ENCODE measurements at regions of chr2 and their contacts with region 1.

Region 1: DNA sequence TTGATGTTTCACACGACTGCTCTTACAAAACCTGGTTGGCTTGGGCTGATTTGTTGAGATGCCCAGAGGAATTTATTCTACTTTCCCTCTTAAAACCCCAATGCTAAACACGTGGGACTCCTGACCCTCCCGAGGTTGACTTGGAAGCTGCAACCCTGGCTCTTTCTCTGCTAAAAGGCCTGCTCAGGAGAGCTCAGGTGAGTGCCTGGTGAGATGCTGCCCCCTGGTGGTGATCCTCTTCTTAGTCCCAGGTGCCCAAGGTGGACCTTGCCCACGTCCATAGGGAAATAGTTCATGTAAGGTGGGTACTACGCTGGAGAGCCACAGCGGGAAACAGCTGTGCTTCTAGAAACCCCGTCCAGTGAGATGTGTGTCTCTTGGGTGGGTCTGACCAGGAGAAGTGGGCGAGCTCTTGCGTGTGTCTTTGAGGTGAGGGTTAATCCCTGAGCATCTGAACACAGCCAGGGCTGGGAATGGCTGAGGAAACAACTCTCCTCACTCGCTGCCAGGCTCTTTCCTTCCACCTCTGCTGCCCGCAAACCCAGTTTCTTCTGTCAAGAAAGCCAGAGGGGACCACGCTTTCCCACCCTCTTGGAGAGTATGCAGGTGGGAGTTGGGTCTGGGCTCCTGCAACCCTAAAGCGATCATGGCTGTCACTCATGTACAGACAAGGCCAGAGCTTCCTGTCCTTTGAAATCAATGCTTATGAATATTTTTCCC is 25.5 kb upstream of the PXDN start:
- DNase-seq: peak; percentile 73
- H3K4me3 Mint-ChIP-seq: no peak overlapping the region
- H3K27ac Mint-ChIP-seq: no peak overlapping the region
- H3K4me1 Mint-ChIP-seq: no peaks in the 10 kb centered on the region
- H3K27me3 Mint-ChIP-seq: peaks cover 2% of the 10 kb centered on the region

Region 2: GRCh38 chr2:1588978-1589621 is 180.8 kb before region 1 on chr2:
- CTCF ChIA-PET with region 1: no interaction called
- intact Hi-C with region 1: loop called (anchors 1 kb)
- DNase-seq: no peak
- H3K4me3 Mint-ChIP-seq: no peak overlapping the region
- H3K27ac Mint-ChIP-seq: no peak overlapping the region
- H3K4me1 Mint-ChIP-seq: no peaks in the 10 kb centered on the region
- H3K27me3 Mint-ChIP-seq: peaks cover 30% of the 10 kb centered on the region

Region 3: GRCh38 chr2:1837022-1837421 is 67.2 kb after region 1 on chr2:
- CTCF ChIA-PET with region 1: no interaction called
- intact Hi-C with region 1: no loop called
- DNase-seq: no peak
- H3K4me3 Mint-ChIP-seq: no peak overlapping the region
- H3K27ac Mint-ChIP-seq: no peak overlapping the region
- H3K4me1 Mint-ChIP-seq: no peaks in the 10 kb centered on the region
- H3K27me3 Mint-ChIP-seq: peaks cover 8% of the 10 kb centered on the region